IMR-90 (cell line): ENCODE measurements at regions of chr4 and their contacts with region 1.

Region 1: DNA sequence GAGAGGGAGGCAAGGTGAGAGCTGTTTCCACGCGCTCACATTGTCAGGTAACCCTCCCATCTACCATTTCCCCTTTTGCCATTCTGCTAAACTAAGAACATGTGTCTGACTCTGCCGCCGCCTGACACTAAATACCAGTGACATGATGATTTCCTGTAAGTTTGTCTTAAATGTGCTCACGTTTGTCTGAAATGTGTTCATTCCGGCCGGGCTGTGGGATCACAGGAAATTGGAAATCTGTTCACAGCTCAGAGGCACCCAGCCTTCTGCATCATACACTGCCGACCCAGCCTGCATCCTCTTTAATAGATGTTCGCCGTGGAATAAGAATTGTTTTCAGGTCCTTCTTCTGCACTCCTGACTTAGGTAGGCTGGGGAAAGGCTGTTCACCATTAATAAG is 336.2 kb upstream of the PPARGC1A start:
- DNase-seq: peak; percentile 66
- ATAC-seq: peak; percentile 64
- H3K4me3 ChIP-seq: no peak overlapping the region
- H3K27ac ChIP-seq: no peak overlapping the region; the same call in 1 of the 2 replicates
- H3K4me1 ChIP-seq: peaks cover 9% of the 10 kb centered on the region
- H3K27me3 ChIP-seq: no peaks in the 10 kb centered on the region
- CTCF ChIP-seq: no peak
- POLR2A ChIP-seq: no peak
- RAD21 ChIP-seq: no peak

Region 2: DNA sequence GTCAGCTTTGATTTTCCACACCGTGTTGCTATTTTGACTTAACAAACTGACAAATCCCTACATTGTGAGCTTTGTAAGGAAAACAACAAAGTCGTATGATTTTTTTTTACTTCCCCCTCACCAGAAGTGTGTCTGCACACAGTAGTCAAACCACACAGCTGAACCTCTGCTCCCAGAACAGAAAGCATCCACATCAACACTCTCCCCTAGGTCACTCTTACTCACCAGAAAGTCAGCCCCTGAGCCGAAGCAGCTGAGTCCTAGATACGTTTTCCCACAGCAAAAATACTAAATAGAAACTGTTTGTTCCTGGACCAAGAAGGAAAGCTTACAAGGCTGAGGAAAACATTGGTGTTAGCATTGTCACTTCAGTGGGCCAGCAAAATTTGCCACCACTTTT is 52.7 kb after region 1 on chr4:
- CTCF ChIA-PET with region 1: no interaction called
- POLR2A ChIA-PET with region 1: no interaction called
- dilution Hi-C with region 1: no loop called
- in situ Hi-C with region 1: no loop called
- intact Hi-C with region 1: no loop called
- DNase-seq: peak; percentile 73
- ATAC-seq: peak; percentile 71
- H3K4me3 ChIP-seq: no peak overlapping the region
- H3K27ac ChIP-seq: no peak overlapping the region
- H3K4me1 ChIP-seq: peaks cover 2% of the 10 kb centered on the region; the same call in 1 of the 2 replicates
- H3K27me3 ChIP-seq: peaks cover 8% of the 10 kb centered on the region
- CTCF ChIP-seq: no peak
- POLR2A ChIP-seq: no peak
- RAD21 ChIP-seq: no peak

Region 3: GRCh38 chr4:24836661-24837242 is 610.7 kb after region 1 on chr4:
- CTCF ChIA-PET with region 1: interaction called, 13 read pairs
- POLR2A ChIA-PET with region 1: no interaction called
- dilution Hi-C with region 1: no loop called
- in situ Hi-C with region 1: no loop called
- intact Hi-C with region 1: no loop called
- DNase-seq: no peak
- ATAC-seq: no peak
- H3K4me3 ChIP-seq: no peak overlapping the region
- H3K27ac ChIP-seq: no peak overlapping the region
- H3K4me1 ChIP-seq: peaks cover 2% of the 10 kb centered on the region; the same call in 1 of the 2 replicates
- H3K27me3 ChIP-seq: no peaks in the 10 kb centered on the region
- CTCF ChIP-seq: no peak
- POLR2A ChIP-seq: no peak
- RAD21 ChIP-seq: no peak